A549 (cell line): ENCODE measurements at regions of chr7 and their contacts with region 1.

Region 1: DNA sequence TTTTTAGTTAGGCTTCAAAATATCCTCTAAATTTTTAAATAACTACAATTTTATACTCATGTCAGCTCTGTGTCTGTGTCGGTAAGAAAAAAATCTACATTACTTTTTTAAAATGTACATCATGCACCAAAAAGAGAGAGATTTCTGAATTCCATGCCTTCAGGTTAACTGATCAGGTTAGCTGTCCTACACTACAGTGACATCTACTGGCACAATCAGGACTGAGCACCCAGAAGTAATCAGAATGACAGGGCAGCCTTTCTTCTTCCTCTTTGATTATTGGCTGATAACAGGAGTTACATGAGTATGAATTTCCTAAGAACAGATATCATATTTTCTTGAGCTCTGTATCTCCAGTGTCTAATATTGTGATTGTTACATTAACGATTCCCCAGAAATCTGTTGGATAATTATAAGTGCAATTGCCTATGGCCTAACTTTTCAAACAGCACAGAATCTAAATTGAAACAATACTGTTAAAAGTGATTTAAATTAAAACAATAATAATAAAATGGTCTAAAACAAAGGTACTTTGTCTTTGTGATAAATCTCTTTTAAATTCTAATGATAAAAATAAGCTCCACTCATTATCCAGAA is 41.8 kb upstream of the HYCC1 start:
- DNase-seq: peak; percentile 38 to 73
- ATAC-seq: peak; percentile 90 to 98
- H3K4me3 ChIP-seq: no peak overlapping the region
- H3K27ac ChIP-seq: no peak overlapping the region
- H3K4me1 ChIP-seq: no peaks in the 10 kb centered on the region
- CTCF ChIP-seq: peak; percentile 94
- EP300 ChIP-seq: no peak
- POLR2A ChIP-seq: no peak
- RAD21 ChIP-seq: peak; percentile 92 to 95

Region 2: DNA sequence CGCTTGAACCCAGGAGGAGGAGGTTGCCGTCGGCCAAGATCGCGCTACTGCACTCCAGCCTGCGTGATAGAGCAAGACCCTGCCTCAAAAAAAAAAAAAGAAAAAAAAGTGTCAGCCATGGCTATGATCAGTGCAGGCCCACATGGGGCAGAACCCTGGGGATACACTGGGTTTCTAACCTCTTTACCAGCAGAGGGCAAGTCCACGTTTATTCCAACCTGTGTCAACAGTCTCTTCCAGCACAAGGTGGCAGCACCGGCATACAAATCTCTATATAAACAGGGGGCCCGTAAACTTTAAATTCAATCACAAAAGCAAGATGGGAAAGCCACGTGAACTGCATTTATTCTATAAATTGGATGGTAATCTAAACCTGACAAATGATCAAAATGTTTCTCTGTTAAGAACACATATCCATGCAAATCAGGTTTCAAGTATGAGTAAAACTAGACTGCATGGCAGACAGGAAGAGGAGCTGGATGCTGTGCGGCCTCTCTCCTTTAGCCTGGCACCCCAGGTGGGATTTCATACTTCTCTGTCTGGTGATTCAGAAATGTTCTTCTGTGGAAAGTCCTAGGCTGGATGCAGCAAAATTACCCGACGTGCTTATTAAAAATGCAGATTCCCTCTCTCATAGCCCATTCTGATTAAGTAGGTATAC is 495.7 kb before region 1 on chr7:
- CTCF ChIA-PET with region 1: interaction called, 101 read pairs
- POLR2A ChIA-PET with region 1: no interaction called
- DNase-seq: peak; percentile 80 to 85
- ATAC-seq: peak; percentile 82 to 92
- H3K4me3 ChIP-seq: no peak overlapping the region
- H3K27ac ChIP-seq: peak overlapping the region in 1 of 2 experiments; percentile 74; a peak in 3 of 6 replicates
- H3K4me1 ChIP-seq: peaks cover 46% of the 10 kb centered on the region
- CTCF ChIP-seq: peak; percentile 99
- EP300 ChIP-seq: no peak
- POLR2A ChIP-seq: no peak
- RAD21 ChIP-seq: peak; percentile 90 to 99

Region 3: GRCh38 chr7:22782616-22783232 is 273.0 kb before region 1 on chr7:
- CTCF ChIA-PET with region 1: interaction called, 10 read pairs
- POLR2A ChIA-PET with region 1: no interaction called
- DNase-seq: peak; percentile 65 to 73
- ATAC-seq: peak; percentile 92 to 98
- H3K4me3 ChIP-seq: no peak overlapping the region
- H3K27ac ChIP-seq: no peak overlapping the region
- H3K4me1 ChIP-seq: peaks cover 7% of the 10 kb centered on the region; the same call in 1 of the 3 replicates
- CTCF ChIP-seq: peak; percentile 66
- EP300 ChIP-seq: no peak
- POLR2A ChIP-seq: no peak
- RAD21 ChIP-seq: peak; percentile 59 to 68

Region 4: GRCh38 chr7:22860784-22861482 is 194.7 kb before region 1 on chr7:
- CTCF ChIA-PET with region 1: interaction called, 20 read pairs
- POLR2A ChIA-PET with region 1: interaction called, 12 read pairs
- DNase-seq: peak; percentile 42 to 51
- ATAC-seq: peak in 1 of 2 experiments; percentile 43; a peak in 3 of 6 replicates
- H3K4me3 ChIP-seq: no peak overlapping the region
- H3K27ac ChIP-seq: peak overlapping the region; percentile 61 to 97; a peak in 5 of 6 replicates
- H3K4me1 ChIP-seq: peaks cover 51% of the 10 kb centered on the region
- CTCF ChIP-seq: peak; percentile 52
- EP300 ChIP-seq: no peak
- POLR2A ChIP-seq: no peak
- RAD21 ChIP-seq: peak in 1 of 2 experiments; percentile 45; a peak in 2 of 5 replicates

Region 5: DNA sequence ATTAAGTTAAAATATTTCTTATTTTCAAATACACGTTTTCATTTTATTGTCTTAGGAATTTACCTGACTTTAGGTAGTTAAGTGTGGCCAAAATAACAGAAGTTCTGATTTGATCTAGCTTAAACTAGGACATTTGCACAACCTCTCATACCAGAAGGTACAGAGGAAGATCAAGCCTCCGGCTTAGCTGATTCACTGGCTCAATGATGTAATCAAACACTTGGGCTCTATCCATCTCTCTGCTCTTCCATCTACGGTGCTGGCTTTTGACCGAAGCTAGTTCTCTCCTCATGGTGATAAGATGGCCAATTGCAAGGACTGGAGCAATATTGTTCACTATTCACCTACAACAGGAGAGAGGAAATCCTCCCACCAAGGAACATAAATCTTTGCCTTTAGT is 29.5 kb before region 1 on chr7:
- CTCF ChIA-PET with region 1: interaction called, 13 read pairs
- POLR2A ChIA-PET with region 1: no interaction called
- DNase-seq: no peak
- ATAC-seq: peak in 1 of 2 experiments; percentile 13; a peak in 1 of 6 replicates
- H3K4me3 ChIP-seq: no peak overlapping the region
- H3K27ac ChIP-seq: no peak overlapping the region
- H3K4me1 ChIP-seq: no peaks in the 10 kb centered on the region
- CTCF ChIP-seq: no peak
- EP300 ChIP-seq: no peak
- POLR2A ChIP-seq: no peak
- RAD21 ChIP-seq: no peak

Region 6: DNA sequence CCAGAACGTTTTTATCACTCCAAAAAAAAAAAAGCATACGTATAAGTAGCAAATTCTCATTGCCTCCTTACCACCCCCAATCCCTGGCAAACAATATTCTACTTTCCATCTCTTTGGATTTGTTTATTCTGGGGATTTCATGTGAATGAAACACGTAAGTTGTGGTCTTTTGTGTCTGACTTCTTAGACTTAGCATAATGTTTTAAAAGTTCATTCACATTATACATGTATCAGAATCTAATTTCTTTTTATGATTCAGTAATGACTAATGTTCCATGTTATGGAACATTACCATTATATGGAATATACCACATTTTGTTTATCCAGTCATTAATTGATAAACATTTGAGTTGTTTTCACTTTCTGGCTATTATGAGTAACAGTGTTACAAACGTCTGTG is 37.4 kb after region 1 on chr7:
- CTCF ChIA-PET with region 1: interaction called, 29 read pairs
- POLR2A ChIA-PET with region 1: no interaction called
- DNase-seq: no peak
- ATAC-seq: no peak
- H3K4me3 ChIP-seq: no peak overlapping the region
- H3K27ac ChIP-seq: no peak overlapping the region
- H3K4me1 ChIP-seq: no peaks in the 10 kb centered on the region
- CTCF ChIP-seq: no peak
- EP300 ChIP-seq: no peak
- POLR2A ChIP-seq: no peak
- RAD21 ChIP-seq: no peak